H1 (cell line): ENCODE measurements at regions of chr7 and their contacts with region 1.

Region 1: DNA sequence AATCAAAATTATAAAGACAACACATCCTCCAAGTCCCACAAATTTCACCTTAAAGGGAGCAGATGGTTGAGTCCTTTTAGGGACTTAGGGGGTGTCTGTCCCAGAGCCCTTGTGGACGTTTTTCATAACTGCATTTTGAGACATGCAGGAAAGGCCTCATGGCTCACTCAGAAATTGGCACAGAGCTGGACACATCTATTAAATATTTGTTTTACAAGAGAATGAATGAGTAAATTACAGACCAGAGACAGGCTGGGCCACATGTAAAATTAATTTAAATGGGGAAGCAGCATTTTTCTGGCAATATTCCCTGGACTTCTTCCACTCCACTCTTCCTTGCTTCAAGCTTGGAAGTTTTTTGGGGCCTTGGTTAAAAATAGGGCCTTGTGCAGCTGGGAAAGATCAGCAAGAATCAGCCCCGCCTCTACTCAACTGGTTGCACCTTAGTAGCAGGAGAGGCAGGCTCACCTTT is 20.0 kb downstream of the LAMB1 start:
- DNase-seq: no peak
- H3K4me3 ChIP-seq: no peak overlapping the region
- H3K27ac ChIP-seq: no peak overlapping the region
- H3K4me1 ChIP-seq: peaks cover 0 to 3% (median 0%) of the 10 kb centered on the region in 4 experiments; a peak in 1 of 7 replicates
- H3K27me3 ChIP-seq: no peaks in the 10 kb centered on the region
- CTCF ChIP-seq: no peak
- EP300 ChIP-seq: no peak
- POLR2A ChIP-seq: no peak
- RAD21 ChIP-seq: no peak

Region 2: GRCh38 chr7:107972075-107972482 is 10.9 kb before region 1 on chr7:
- CTCF ChIA-PET with region 1: interaction called, 19 read pairs
- POLR2A ChIA-PET with region 1: no interaction called
- DNase-seq: no peak
- H3K4me3 ChIP-seq: no peak overlapping the region
- H3K27ac ChIP-seq: no peak overlapping the region
- H3K4me1 ChIP-seq: peaks cover 0 to 6% (median 6%) of the 10 kb centered on the region in 4 experiments; a peak in 6 of 7 replicates
- H3K27me3 ChIP-seq: no peaks in the 10 kb centered on the region
- CTCF ChIP-seq: no peak
- EP300 ChIP-seq: no peak
- POLR2A ChIP-seq: no peak
- RAD21 ChIP-seq: no peak

Region 3: GRCh38 chr7:108002726-108003598 is 20.0 kb after region 1 on chr7 and contains the start of gene LAMB1:
- CTCF ChIA-PET with region 1: interaction called, 12 read pairs
- POLR2A ChIA-PET with region 1: interaction called, 4 read pairs
- DNase-seq: peak in 1 of 2 experiments; percentile 87
- H3K4me3 ChIP-seq: peak within 1 kb of the TSS; percentile 40 to 92 (median 69)
- H3K27ac ChIP-seq: no peak within 1 kb of the TSS
- H3K4me1 ChIP-seq: peaks cover 7 to 21% (median 11%) of the 10 kb centered on the region in 4 experiments
- H3K27me3 ChIP-seq: peaks cover 34 to 75% (median 65%) of the 10 kb centered on the region in 4 experiments
- CTCF ChIP-seq: no peak
- EP300 ChIP-seq: no peak
- POLR2A ChIP-seq: no peak
- RAD21 ChIP-seq: no peak
- total RNA-seq, gene LAMB1: 37.2 and 38.5 TPM in 2 replicates

Region 4: GRCh38 chr7:108124820-108125219 is 141.9 kb after region 1 on chr7:
- CTCF ChIA-PET with region 1: no interaction called
- POLR2A ChIA-PET with region 1: no interaction called
- DNase-seq: no peak
- H3K4me3 ChIP-seq: no peak overlapping the region
- H3K27ac ChIP-seq: no peak overlapping the region
- H3K4me1 ChIP-seq: no peaks in the 10 kb centered on the region
- H3K27me3 ChIP-seq: no peaks in the 10 kb centered on the region
- CTCF ChIP-seq: no peak
- EP300 ChIP-seq: no peak
- POLR2A ChIP-seq: no peak
- RAD21 ChIP-seq: no peak